B cell (primary cell): ENCODE measurements at regions of chr7 and their contacts with region 1.

Region 1: GRCh38 chr7:133230591-133231194 is 22.2 kb upstream of the EXOC4 start:
- DNase-seq: peak; percentile 51
- ATAC-seq: no peak
- H3K4me3 ChIP-seq: no peak overlapping the region
- H3K4me3 Mint-ChIP-seq: no peak overlapping the region
- H3K27ac ChIP-seq: no peak overlapping the region
- H3K27ac Mint-ChIP-seq: no peak overlapping the region
- H3K4me1 ChIP-seq: no peaks in the 10 kb centered on the region
- H3K4me1 Mint-ChIP-seq: no peaks in the 10 kb centered on the region
- H3K27me3 ChIP-seq: no peaks in the 10 kb centered on the region
- H3K27me3 Mint-ChIP-seq: peaks cover 14% of the 10 kb centered on the region
- CTCF ChIP-seq: peak; percentile 71

Region 2: DNA sequence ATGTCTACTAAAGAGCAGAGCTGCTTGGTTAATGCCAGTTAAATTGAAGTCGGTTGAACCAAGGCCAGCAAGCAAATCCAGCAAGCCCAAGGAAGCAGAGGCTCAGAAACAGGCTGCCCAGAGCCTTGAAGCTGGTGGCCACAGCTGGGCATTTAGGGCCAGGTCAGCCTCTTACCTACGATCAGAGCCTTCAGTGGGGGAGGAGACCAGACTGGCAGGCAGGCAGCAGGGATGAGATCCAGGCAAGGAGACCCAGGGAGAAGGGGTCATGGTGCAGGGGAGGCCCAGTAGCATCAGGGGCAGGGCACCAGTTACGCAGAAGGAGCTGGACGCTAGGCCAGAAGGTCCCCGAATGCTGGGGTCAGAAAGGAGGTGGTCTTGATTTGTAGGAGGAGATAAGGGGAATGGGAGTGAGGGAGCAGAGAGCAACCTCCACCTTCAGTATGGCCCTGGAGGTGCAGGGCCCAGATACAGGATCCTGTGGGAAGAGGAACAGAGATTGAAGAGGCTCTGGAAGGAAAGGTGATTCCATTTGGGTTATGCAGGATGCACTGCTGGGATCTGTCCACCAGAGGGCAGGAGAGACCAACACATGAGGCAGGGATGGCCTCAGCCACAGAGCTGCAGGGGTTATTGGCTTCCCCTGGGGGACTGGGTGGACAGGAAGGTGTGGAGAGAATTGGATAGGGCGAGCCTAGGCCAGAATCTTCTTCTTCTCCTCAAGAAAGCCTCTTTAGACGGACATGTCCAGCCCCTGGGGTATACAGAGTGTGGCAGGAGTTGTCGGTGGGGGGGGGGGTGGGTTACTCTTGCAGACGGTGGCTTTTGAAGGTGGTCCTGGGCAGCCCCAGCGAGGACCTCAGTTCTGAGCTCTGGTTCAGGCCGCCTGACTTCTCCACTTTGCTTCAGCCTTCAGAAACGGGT is 1541.7 kb before region 1 on chr7:
- CTCF ChIA-PET with region 1: no interaction called
- POLR2A ChIA-PET with region 1: no interaction called
- intact Hi-C with region 1: loop called (anchors 5 kb)
- DNase-seq: peak; percentile 58
- ATAC-seq: peak; percentile 61
- H3K4me3 ChIP-seq: no peak overlapping the region
- H3K4me3 Mint-ChIP-seq: no peak overlapping the region
- H3K27ac ChIP-seq: no peak overlapping the region
- H3K27ac Mint-ChIP-seq: no peak overlapping the region
- H3K4me1 ChIP-seq: no peaks in the 10 kb centered on the region
- H3K4me1 Mint-ChIP-seq: peaks cover 4% of the 10 kb centered on the region
- H3K27me3 ChIP-seq: peaks cover 0 to 32% (median 5%) of the 10 kb centered on the region in 4 experiments
- H3K27me3 Mint-ChIP-seq: peaks cover 45% of the 10 kb centered on the region
- CTCF ChIP-seq: peak; percentile 94

Region 3: DNA sequence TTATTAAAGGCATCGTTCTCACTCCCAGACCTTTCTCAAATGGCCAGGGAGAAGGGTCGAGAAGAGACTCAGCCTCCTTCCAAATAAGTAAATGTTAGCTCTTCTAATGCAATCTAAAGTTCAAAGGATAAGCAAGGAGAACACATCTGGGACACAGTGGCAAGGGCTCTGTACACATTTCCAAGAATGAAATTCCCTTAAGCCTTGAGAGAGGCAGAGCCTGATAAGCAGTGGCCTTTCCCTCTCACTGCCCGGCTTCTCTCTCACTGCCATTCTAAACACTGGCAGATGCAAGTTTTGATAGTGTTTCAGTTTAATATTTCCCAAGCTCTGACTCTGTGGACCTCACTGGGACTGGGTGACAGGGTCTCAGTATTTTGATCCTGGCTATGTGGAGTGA is 12.9 kb before region 1 on chr7:
- CTCF ChIA-PET with region 1: no interaction called
- POLR2A ChIA-PET with region 1: no interaction called
- intact Hi-C with region 1: no loop called
- DNase-seq: no peak
- ATAC-seq: no peak
- H3K4me3 ChIP-seq: no peak overlapping the region
- H3K4me3 Mint-ChIP-seq: no peak overlapping the region
- H3K27ac ChIP-seq: no peak overlapping the region
- H3K27ac Mint-ChIP-seq: no peak overlapping the region
- H3K4me1 ChIP-seq: no peaks in the 10 kb centered on the region
- H3K4me1 Mint-ChIP-seq: no peaks in the 10 kb centered on the region
- H3K27me3 ChIP-seq: peaks cover 0 to 7% (median 0%) of the 10 kb centered on the region in 4 experiments
- H3K27me3 Mint-ChIP-seq: peaks cover 16% of the 10 kb centered on the region
- CTCF ChIP-seq: no peak